HepG2 (cell line): ENCODE measurements at regions of chr2 and their contacts with region 1.

Region 1: DNA sequence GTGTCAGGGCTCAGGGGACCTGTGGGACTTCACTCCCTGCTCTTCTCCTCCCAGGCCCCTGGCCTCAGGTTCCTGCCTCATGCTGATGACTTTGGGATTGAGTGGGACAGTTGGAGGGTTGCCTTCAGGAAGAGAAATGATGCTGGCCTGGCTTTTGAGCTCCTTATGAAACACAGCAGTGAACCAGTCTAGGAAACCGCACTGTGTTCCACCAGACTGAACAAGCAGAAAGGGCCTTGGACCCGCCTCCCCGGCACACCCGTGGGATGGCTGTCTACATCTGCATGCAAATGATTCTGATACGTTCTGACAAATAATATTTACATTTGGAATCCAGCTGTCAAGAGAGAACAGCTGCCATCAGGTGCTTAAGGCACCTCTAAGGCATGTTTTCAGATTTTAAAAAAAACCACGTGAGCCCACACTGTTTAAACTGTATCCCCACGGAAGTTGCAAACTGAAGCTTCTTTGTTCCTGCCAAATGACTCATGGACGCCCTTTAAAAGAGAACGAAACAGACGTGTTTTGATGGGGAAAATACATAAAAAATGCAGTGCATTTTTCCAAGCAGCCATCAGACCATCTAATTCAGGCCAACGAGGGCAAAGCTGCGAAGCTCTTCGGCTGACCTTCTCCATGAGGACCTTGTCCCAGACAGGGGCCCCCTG is 27.6 kb upstream of the ASAP2 start:
- DNase-seq: peak; percentile 93
- ATAC-seq: peak; percentile 86
- H3K4me3 ChIP-seq: peak overlapping the region in 1 of 3 experiments; percentile 2; a peak in 2 of 6 replicates
- H3K27ac ChIP-seq: peak overlapping the region; percentile 43
- H3K4me1 ChIP-seq: peaks cover 41% of the 10 kb centered on the region
- H3K27me3 ChIP-seq: peaks cover 2 to 24% of the 10 kb centered on the region in 2 experiments; a peak in 4 of 5 replicates
- CTCF ChIP-seq: no peak
- EP300 ChIP-seq: peak in 1 of 2 experiments; percentile 60; a peak in 1 of 4 replicates
- POLR2A ChIP-seq: no peak
- RAD21 ChIP-seq: no peak

Region 2: GRCh38 chr2:9205963-9206948 is 27.2 kb after region 1 on chr2 and contains the start of gene ASAP2:
- CTCF ChIA-PET with region 1: no interaction called
- POLR2A ChIA-PET with region 1: interaction called, 11 read pairs
- in situ Hi-C with region 1: no loop called
- intact Hi-C with region 1: loop called (anchors 1 kb)
- DNase-seq: peak; percentile 59
- ATAC-seq: peak; percentile 79
- H3K4me3 ChIP-seq: peak within 1 kb of the TSS; percentile 87 to 96 (median 90)
- H3K27ac ChIP-seq: peak within 1 kb of the TSS; percentile 1
- H3K4me1 ChIP-seq: peaks cover 62% of the 10 kb centered on the region
- H3K27me3 ChIP-seq: no peaks in the 10 kb centered on the region; a peak in 1 of 5 replicates
- CTCF ChIP-seq: peak; percentile 89
- EP300 ChIP-seq: no peak
- POLR2A ChIP-seq: peak in 1 of 2 experiments; percentile 31; a peak in 1 of 4 replicates
- RAD21 ChIP-seq: peak; percentile 96
- total RNA-seq, gene ASAP2: 7.3 and 7.5 TPM in 2 replicates